ENCODE measurements at regions of chr19 and their contacts with region 1.

Region 1: DNA sequence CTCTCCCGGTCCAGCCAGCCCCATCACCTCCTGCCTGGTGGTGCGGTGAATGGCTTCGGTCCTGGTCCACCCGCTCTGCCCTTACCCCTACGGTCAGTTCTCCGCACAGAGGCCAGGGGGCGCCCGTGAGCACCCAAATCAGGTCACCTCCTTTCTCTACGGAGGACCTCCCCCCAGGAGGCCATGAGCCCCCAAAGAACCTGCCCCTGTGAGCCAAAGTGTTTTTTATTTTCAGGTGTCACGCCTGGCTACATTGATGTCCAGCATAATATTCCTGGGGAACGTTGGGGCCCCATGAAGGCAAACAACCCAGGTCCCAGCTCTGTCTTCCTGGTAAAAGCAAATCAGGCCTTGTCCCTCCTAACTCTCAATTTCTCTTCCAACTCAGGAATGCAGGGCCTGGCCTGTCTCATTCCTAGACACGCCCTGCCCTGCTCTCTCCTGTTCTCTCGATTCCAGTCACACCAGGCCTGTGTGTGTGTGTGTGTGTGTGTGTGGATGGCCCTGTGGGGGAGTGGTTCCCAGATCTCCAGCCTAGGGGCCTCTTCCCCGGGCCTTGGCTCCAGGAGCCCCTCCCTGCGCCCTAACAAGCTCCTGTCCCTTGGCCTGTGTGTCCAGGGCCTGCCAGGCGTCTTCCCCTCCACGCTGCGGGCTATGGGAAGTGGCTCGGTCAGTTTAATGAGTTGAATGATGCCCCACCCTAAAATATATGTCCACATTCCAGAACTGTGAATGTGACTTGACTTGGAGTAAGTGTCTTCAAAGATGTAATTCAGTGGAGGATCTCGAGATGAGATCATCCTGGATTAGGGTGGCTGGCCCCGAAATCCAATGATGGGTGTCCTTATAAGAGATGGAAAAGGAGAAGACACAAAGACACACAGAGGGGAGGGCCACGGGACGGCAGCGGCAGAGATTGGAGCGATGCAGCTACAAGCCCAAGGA is 9.8 kb upstream of the GIPC1 start:
- DNase-seq: peak; percentile 82
- ATAC-seq: peak; percentile 72
- H3K4me3 Mint-ChIP-seq: no peak overlapping the region
- H3K27ac Mint-ChIP-seq: peak overlapping the region; percentile 65
- H3K4me1 Mint-ChIP-seq: peaks cover 33% of the 10 kb centered on the region
- H3K27me3 Mint-ChIP-seq: no peaks in the 10 kb centered on the region

Region 2: GRCh38 chr19:14487370-14488125 is 18.2 kb before region 1 on chr19:
- CTCF ChIA-PET with region 1: interaction called, 29 read pairs
- DNase-seq: no peak
- ATAC-seq: no peak
- H3K4me3 Mint-ChIP-seq: no peak overlapping the region
- H3K27ac Mint-ChIP-seq: no peak overlapping the region
- H3K4me1 Mint-ChIP-seq: peaks cover 6% of the 10 kb centered on the region
- H3K27me3 Mint-ChIP-seq: no peaks in the 10 kb centered on the region

Region 3: DNA sequence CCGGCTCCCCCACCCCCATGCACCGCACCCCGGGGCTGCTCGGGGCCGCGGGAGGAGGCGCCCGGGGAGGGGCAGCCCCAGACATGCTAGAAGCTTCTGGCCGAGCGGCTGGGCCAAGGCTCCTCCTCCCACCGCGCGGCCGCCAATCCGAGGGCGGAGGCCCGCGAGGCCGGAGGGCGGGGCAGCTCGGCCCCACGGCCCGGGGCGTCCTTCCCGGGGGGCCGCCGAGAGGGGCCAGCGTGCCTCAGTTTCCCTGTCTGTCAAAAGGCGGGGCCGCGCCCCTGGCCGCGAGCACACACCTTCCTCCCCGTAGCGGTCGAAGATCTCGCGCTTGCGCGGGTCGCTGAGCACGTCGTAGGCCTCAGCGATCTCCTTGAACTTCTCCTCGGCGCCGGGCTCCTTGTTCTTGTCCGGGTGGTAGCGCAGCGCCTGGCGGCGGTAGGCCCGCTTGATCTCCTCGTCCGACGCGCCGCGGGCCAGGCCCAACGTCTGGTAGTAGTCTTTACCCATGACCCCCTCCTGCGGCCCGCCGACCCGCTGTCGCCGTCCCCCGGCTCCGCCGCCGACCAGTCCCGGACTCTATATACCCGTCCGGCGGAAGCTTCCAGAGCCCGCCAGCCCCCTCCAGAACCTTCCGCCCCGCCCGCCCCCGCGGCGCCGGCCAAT is 12.2 kb after region 1 on chr19 and contains the start of gene DNAJB1:
- CTCF ChIA-PET with region 1: interaction called, 73 read pairs
- DNase-seq: peak; percentile 82
- ATAC-seq: peak; percentile 69
- H3K4me3 Mint-ChIP-seq: peak within 1 kb of the TSS; percentile 83
- H3K27ac Mint-ChIP-seq: peak within 1 kb of the TSS; percentile 93
- H3K4me1 Mint-ChIP-seq: peaks cover 65% of the 10 kb centered on the region
- H3K27me3 Mint-ChIP-seq: no peaks in the 10 kb centered on the region
- total RNA-seq, gene DNAJB1: 86.0 to 103 TPM

Region 4: DNA sequence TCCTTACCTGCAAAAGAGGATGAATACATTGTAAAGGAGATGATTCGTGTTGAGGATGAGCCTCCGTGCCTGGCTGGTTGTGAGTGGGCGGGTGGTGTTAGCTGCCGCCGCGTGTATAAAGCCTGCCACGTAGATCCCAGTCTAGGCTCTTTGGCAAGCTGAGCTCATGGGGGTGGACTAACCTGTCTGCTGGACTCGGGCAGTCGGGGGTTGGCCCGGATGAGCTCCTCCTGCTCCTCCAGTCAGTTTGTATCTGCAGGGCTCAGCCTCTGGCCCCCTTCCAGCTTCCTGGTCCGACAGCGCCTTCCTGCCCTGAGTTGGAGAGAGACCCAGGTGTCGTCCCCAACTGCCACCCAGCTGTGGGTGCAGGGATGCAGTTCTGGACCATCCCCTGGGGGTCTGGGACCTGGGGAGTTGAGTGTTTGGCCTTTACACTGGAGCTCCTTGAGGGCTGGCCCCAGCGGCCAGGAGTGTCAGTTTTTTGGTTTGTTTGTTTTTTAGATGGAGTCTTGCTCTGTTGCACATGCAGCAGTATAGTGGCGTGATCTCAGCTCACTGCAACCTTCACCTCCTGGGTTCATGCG is 44.5 kb after region 1 on chr19:
- CTCF ChIA-PET with region 1: interaction called, 10 read pairs
- DNase-seq: no peak
- ATAC-seq: no peak
- H3K4me3 Mint-ChIP-seq: no peak overlapping the region
- H3K27ac Mint-ChIP-seq: no peak overlapping the region
- H3K4me1 Mint-ChIP-seq: peaks cover 16% of the 10 kb centered on the region
- H3K27me3 Mint-ChIP-seq: no peaks in the 10 kb centered on the region